Gastrocnemius medialis (tissue), 4 donors: ENCODE measurements at regions of chr2 and their contacts with region 1.

Region 1: GRCh38 chr2:178796079-178796677 is 11.0 kb downstream of the TTN start:
- DNase-seq: no peak
- ATAC-seq: no peak
- H3K4me3 ChIP-seq: no peak overlapping the region
- H3K27ac ChIP-seq: peak overlapping the region in 2 of 4 donors; percentile 26 to 33
- H3K4me1 ChIP-seq: peaks cover 92 to 97% of the 10 kb centered on the region in 2 donors
- H3K27me3 ChIP-seq: no peaks in the 10 kb centered on the region
- CTCF ChIP-seq: peak; percentile 34 to 73 (median 59)
- POLR2A ChIP-seq: no peak

Region 2: DNA sequence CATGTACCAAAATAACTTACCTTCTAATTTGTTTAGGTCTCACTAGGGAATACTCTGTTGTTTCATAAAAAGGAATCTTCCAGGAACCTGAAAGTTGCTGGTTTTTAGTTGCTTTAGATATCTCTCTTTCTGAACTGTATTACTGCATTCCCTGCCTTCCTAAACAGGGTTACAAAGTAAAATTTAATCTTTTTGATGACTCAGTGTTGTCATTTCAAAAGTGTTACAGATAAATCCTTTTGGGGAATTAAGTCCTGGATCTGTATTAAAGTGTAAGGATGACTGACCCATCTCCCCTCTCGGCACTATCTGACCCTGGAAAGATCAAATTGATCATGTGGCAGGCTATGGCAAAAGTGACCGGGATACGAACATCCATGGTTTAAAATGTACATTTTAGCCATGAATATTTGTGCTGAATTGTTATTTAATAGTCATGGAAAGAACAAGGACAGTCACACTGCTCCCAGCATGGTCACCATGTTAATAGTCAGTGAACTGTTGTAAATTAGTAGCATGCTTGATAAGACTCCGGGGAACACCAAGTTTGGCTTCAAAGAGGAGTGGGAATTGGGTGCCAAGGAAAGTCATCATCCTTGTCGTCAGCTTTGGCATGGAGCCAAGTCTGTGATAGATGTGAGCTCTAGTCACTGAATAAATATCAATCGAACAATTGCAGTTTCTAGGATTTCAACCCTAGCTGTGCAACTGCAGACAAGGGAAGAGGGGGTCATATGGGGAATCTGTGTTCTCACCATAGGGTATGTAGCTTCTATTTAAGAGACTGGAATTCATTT is 311.7 kb before region 1 on chr2:
- in situ Hi-C with region 1: no loop called
- intact Hi-C with region 1: no loop called
- DNase-seq: no peak
- ATAC-seq: no peak
- H3K4me3 ChIP-seq: no peak overlapping the region
- H3K27ac ChIP-seq: no peak overlapping the region
- H3K4me1 ChIP-seq: peaks cover 46 to 50% of the 10 kb centered on the region in 2 donors
- H3K27me3 ChIP-seq: no peaks in the 10 kb centered on the region
- CTCF ChIP-seq: no peak
- POLR2A ChIP-seq: no peak

Region 3: GRCh38 chr2:178615969-178616368 is 180.2 kb before region 1 on chr2:
- in situ Hi-C with region 1: loop called in 1 of 4 experiments (anchors 25 kb)
- intact Hi-C with region 1: no loop called
- DNase-seq: no peak
- ATAC-seq: no peak
- H3K4me3 ChIP-seq: no peak overlapping the region
- H3K27ac ChIP-seq: peak overlapping the region in 1 of 4 donors; percentile 79
- H3K4me1 ChIP-seq: peaks cover 22 to 28% of the 10 kb centered on the region in 2 donors
- H3K27me3 ChIP-seq: no peaks in the 10 kb centered on the region
- CTCF ChIP-seq: no peak
- POLR2A ChIP-seq: no peak

Region 4: DNA sequence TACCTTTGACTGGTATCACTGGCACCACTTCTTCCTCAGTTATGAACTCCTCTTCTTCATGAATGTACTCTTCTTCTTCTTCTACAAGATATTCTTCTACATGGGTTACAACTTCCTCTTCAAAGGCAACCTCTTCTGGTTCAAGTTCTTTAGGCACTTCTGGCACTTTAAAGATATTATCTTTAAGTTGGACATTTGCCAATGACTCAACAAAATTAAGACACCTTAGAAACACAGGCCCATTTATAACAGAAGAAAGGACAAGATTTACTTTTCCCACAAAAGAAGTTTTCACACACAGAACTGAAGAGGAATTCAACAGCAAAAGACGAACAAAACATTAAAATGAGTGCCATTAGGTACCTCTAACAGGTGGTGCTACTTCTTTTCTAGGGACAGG is 116.3 kb before region 1 on chr2:
- in situ Hi-C with region 1: loop called in 1 of 4 experiments (anchors 25 kb)
- intact Hi-C with region 1: no loop called
- DNase-seq: no peak
- ATAC-seq: peak in 1 of 2 donors; percentile 11
- H3K4me3 ChIP-seq: no peak overlapping the region
- H3K27ac ChIP-seq: peak overlapping the region in 2 of 4 donors; percentile 12 to 64
- H3K4me1 ChIP-seq: peaks cover 10 to 25% of the 10 kb centered on the region in 2 donors
- H3K27me3 ChIP-seq: no peaks in the 10 kb centered on the region
- CTCF ChIP-seq: no peak
- POLR2A ChIP-seq: no peak

Region 5: DNA sequence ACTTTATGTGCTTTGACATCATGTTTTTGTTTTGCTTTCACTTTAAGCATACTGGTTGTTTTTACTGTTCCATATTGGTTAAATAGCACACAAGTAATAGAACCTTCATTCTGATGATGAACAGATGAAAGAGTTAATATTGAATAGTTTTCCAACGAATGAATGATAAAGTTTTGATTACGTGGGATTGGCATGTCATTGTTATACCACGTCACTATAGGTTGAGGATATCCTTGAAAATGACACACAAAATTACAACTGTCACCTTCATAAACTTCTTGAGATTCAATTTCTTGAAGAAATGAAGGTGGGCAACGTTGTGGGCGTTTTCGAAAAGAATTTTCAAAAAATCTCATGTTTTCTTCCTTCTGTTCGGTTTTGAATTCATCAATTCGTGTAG is 45.9 kb before region 1 on chr2:
- in situ Hi-C with region 1: no loop called
- intact Hi-C with region 1: loop called (anchors 5 kb)
- DNase-seq: no peak
- ATAC-seq: no peak
- H3K4me3 ChIP-seq: no peak overlapping the region
- H3K27ac ChIP-seq: peak overlapping the region in 2 of 4 donors; percentile 11 to 28
- H3K4me1 ChIP-seq: peaks cover 70 to 74% of the 10 kb centered on the region in 2 donors
- H3K27me3 ChIP-seq: no peaks in the 10 kb centered on the region
- CTCF ChIP-seq: no peak
- POLR2A ChIP-seq: no peak

Region 6: DNA sequence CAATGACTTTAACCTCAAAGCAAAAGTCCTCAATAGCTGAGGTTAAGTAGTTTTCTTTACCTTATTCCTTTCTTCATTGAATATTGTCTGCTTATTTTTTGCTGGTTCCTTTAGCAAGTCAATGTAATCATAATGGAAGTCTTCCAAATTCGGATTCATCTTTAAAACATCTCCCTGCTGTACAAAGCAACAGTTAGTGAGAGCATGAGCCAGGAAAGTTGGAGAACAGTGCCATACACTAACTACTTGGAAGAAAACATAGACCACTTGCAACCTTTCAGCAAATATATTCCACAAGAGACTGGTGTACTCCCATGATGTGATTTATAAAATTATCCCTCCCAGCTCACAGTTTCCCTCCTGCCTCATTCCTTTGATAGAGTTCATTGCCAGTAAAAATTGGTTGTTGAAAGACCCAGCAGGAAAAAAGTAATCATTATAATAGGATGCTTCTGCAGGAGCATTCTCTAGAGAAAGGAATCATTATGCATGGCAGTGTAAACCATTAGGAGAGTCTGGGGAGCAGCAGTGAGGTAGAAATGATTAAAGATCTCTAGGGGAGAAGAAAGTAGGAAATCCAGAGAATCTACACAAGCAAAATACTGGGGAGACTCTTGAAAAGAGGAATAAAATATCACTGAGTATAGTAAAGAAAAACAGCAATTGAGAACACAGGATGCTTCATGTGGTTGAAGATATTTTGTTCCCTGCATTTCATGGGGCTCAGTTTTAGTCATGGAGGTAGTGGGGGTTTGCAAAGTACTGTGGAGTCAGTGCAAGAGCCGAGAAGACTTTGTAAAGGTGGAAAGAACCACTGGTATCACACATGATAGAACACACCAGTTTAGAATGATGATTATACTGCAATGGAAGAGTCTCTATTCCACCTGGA is 49.6 kb after region 1 on chr2:
- in situ Hi-C with region 1: no loop called
- intact Hi-C with region 1: no loop called
- DNase-seq: no peak
- ATAC-seq: peak in 1 of 2 donors; percentile 43
- H3K4me3 ChIP-seq: no peak overlapping the region
- H3K27ac ChIP-seq: peak overlapping the region; percentile 62 to 84 (median 78)
- H3K4me1 ChIP-seq: peaks cover 35 to 38% of the 10 kb centered on the region in 2 donors
- H3K27me3 ChIP-seq: no peaks in the 10 kb centered on the region
- CTCF ChIP-seq: no peak
- POLR2A ChIP-seq: no peak

Region 7: DNA sequence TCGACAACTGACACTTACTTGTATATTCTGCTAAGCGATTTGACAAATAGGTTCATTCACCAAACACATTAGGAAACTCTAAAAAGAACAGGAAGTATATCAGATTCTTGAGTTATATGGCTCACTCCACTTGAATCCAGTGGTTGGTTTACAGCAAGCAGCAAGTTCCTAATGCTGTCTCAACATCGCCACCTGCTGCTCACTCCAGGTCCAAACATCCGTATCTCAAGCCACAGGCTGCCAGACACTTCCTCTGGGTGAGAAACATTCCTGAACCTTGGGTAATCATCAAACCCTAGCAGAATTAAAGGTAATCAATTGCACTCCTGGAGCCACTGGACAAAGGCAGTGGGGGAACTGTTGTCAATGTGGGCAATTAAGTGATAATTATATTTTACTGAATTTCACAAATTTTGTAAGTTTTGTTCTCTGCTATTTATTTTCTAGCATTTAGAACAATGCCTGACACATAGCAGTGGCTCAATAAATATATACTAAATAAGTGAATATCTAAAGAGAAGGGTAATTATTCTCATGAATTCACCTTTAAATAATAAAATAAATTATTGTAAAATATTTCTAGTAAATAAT is 118.2 kb after region 1 on chr2:
- in situ Hi-C with region 1: loop called (anchors 5 to 10 kb)
- intact Hi-C with region 1: loop called (anchors 2 kb)
- DNase-seq: peak; percentile 76 to 85
- ATAC-seq: peak; percentile 84 to 89
- H3K4me3 ChIP-seq: no peak overlapping the region
- H3K27ac ChIP-seq: peak overlapping the region; percentile 48 to 83 (median 78)
- H3K4me1 ChIP-seq: peaks cover 44 to 50% of the 10 kb centered on the region in 2 donors
- H3K27me3 ChIP-seq: no peaks in the 10 kb centered on the region
- CTCF ChIP-seq: peak; percentile 82 to 86 (median 85)
- POLR2A ChIP-seq: no peak